ENCODE measurements at regions of chr4 and their contacts with region 1.

Region 1: DNA sequence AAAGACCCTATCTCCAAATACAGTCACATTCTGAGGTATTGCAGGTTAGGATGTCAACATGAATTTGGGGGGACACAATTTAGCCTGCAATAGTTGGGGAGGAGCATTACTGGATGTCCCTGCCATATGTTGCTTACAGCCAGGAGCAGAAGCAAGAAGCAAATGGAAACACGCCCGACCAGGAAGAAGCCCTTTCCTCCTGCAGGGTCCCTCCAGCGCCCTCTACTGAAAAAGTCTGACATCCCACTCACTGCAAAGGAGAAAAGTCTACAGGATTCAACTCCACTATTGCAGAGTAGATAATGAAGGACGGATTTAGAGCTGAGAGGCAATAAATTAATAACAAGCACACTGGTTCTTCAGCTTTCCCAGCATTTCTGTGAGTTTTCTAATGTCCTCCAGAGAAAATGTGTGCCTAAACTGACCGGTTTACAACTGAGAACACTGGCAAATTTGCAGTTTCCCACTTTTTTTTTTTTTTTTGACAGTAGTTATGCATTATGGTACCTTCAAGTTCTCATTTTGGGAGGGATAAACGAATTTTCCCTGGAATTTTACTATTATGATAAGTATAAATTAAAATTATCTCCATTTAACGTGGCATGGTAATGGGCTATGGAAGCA is 31.7 kb downstream of the COQ2 start:
- DNase-seq: peak in 1 of 2 donors; percentile 55
- H3K4me3 ChIP-seq: no peak overlapping the region
- H3K27ac ChIP-seq: no peak overlapping the region
- H3K4me1 ChIP-seq: peaks cover 0 to 27% (median 7%) of the 10 kb centered on the region in 4 donors
- H3K27me3 ChIP-seq: no peaks in the 10 kb centered on the region
- CTCF ChIP-seq: peak; percentile 34 to 43

Region 2: DNA sequence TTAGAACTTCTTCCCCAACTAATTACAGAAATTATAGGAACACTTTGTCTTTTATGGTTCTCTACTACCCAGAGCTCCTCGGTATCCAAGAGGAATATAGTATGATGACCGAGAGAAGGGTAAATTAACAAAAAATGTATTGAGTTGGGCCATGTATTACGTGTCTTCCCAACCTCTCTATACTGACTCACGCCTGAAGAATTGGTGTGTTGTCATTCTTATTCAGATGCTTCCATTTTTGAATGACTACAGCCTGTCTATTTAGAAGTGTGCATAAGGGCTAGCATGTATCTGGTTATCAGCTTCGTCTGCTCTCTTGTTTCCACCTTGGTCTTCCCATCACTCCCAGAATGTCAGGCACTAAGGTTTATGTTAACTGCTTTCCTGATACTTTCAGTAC is 429.8 kb before region 1 on chr4:
- intact Hi-C with region 1: no loop called
- DNase-seq: no peak
- H3K4me3 ChIP-seq: no peak overlapping the region
- H3K27ac ChIP-seq: no peak overlapping the region
- H3K4me1 ChIP-seq: no peaks in the 10 kb centered on the region
- H3K27me3 ChIP-seq: no peaks in the 10 kb centered on the region
- CTCF ChIP-seq: no peak

Region 3: DNA sequence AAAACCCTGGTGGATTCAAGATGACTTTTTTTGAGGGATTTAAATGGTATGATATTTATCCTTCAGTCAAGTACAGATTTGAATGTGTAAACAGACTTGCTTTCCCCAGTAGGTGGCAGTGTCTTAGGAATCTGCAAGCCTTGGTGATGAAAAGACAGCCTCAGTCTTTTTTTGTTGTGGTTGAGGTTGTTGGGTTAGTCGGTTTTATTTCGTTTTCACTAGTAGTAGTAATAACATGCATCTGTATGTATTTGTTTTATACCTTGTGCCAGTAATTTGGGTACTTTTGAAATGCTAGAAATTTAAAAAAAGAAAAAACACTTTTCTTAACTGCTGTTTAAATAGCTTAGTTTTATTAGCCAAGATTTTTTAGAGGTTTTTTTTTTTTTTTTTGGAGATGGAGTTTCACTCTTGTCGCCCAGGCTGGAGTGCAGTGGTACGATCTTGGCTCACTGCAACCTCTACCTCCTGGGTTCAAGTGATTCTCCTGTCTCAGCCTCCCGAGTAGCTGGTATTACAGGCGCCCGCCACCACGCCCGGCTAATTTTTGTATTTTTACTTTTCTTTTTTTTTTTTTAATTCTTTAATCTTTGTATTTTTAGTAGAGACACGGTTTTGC is 178.7 kb before region 1 on chr4:
- intact Hi-C with region 1: loop called (anchors 10 kb)
- DNase-seq: no peak
- H3K4me3 ChIP-seq: no peak overlapping the region
- H3K27ac ChIP-seq: no peak overlapping the region
- H3K4me1 ChIP-seq: no peaks in the 10 kb centered on the region
- H3K27me3 ChIP-seq: no peaks in the 10 kb centered on the region
- CTCF ChIP-seq: peak; percentile 59